GM18951 (cell line): ENCODE measurements at regions of chr6 and their contacts with region 1.

Region 1: GRCh38 chr6:75183099-75183541 is 22.7 kb downstream of the COL12A1 start:
- POLR2A ChIP-seq: no peak

Region 2: GRCh38 chr6:74404366-74404765 is 778.8 kb before region 1 on chr6:
- in situ Hi-C with region 1: loop called (anchors 10 kb)
- POLR2A ChIP-seq: no peak